Activated CD8-positive, alpha-beta memory T cell treated with anti-CD3 and anti-CD28 coated beads, Interleukin-2, amount 10 ng/mL, durations not matched to agents 7 days and 5 days (primary cell): ENCODE measurements at regions of chr20 and their contacts with region 1.

Region 1: DNA sequence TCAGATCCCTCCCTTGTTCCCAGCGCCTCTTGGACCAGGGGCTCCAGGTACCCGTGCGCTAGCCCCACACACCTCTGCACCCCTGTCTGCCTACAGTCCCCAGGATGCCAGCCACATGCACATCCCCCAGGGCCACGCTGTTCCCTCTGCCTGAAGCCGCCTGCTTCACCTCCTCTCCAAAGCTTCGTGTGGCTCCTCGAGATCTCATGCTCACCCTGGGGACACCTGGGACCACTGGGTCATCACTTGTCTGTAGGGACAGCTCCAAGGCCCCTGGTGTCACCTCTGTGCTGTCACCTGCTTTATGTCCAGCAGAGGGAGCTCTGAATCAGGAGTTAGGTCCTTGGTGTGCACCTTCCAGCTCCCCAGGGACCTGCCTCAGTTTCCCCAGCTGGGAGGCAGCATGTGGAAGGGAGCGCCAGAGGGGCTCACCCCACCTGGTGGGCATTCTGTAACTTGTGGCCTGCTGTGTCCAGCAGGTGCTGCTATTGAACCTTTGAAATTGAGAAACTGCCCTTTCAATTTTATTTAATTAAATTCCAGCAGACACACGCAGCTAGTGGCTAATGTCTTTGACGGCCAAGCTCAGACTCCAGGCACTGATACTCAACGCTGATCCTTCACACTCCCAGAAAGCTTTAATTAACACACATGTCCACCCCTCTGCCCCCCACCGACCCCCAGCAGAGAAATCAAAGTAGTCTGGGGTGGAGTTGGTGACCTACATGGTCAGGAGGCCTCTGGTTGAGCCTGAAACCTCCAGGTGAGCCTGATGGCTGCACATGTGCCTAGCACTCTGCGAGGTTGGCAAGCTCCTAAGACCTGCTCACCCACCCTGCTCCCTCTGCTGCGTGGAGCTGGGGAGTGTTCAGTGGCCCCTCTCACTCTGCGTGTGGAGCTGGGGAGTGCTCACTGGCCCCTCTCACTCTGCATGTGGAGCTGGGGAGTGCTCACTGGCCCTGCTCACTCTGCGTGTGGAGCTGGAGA is 7.6 kb upstream of the YTHDF1 start:
- DNase-seq: peak; percentile 63
- ATAC-seq: peak; percentile 35
- H3K4me3 Mint-ChIP-seq: no peak overlapping the region
- H3K27ac Mint-ChIP-seq: no peak overlapping the region
- H3K4me1 Mint-ChIP-seq: no peaks in the 10 kb centered on the region
- H3K27me3 Mint-ChIP-seq: no peaks in the 10 kb centered on the region

Region 2: DNA sequence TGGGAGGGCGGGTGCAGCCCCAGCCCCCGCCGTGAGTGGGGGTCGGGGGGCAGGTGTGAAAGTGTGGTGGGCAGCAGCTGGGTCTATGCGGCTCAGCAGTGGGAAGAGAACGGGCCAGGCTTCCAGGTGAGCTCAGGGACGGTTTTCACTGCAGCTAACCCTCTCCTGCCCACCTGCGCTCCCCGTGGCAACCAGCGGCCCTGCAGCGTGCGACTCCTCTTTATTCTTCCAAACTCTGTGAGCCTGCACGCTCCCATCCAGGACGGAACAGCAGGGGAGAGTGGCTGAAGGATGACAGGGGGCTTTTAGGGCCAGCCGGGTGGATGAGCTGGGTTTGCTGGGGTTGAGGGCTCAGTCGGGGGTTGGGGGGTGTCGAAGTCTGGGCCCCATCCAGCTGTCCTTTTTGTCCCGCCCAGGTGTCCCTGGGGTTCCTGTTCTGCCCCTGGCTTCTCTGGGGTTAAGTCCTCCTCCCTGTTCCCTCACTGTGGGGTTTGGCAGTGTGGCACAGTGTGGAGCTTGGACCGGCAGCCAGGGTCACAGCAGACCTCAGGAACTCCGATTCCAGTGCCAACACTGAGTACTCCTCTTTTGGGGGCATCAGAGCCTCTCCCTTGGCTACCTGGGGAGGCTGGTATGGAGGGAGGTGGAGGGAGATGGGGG is 11.4 kb after region 1 on chr20:
- CTCF ChIA-PET with region 1: interaction called, 26 read pairs
- DNase-seq: no peak
- ATAC-seq: no peak
- H3K4me3 Mint-ChIP-seq: no peak overlapping the region
- H3K27ac Mint-ChIP-seq: no peak overlapping the region
- H3K4me1 Mint-ChIP-seq: no peaks in the 10 kb centered on the region
- H3K27me3 Mint-ChIP-seq: peaks cover 27% of the 10 kb centered on the region

Region 3: DNA sequence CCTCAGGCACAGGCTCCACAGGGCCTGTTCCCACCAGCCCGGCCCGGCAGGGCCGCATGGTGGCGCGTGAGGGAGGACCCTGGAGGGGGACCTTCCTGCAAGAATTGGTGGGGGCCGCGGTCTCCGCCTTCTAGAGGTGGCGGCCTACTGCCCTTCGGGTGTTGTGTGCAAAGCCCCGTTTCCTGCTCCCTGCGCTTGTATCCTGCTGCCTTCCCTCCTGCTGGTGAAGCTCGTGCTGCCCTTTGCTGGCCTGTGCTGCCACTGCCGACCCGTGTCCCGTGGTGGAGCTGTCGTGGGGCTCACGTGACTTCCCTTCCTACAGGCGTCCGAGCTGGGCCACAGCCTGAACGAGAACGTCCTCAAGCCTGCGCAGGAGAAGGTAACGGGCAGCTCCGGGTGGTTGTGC is 61.0 kb after region 1 on chr20:
- CTCF ChIA-PET with region 1: interaction called, 10 read pairs
- DNase-seq: peak; percentile 51
- ATAC-seq: peak; percentile 35
- H3K4me3 Mint-ChIP-seq: peak overlapping the region; percentile 65
- H3K27ac Mint-ChIP-seq: peak overlapping the region; percentile 70
- H3K4me1 Mint-ChIP-seq: peaks cover 4% of the 10 kb centered on the region
- H3K27me3 Mint-ChIP-seq: no peaks in the 10 kb centered on the region

Region 4: DNA sequence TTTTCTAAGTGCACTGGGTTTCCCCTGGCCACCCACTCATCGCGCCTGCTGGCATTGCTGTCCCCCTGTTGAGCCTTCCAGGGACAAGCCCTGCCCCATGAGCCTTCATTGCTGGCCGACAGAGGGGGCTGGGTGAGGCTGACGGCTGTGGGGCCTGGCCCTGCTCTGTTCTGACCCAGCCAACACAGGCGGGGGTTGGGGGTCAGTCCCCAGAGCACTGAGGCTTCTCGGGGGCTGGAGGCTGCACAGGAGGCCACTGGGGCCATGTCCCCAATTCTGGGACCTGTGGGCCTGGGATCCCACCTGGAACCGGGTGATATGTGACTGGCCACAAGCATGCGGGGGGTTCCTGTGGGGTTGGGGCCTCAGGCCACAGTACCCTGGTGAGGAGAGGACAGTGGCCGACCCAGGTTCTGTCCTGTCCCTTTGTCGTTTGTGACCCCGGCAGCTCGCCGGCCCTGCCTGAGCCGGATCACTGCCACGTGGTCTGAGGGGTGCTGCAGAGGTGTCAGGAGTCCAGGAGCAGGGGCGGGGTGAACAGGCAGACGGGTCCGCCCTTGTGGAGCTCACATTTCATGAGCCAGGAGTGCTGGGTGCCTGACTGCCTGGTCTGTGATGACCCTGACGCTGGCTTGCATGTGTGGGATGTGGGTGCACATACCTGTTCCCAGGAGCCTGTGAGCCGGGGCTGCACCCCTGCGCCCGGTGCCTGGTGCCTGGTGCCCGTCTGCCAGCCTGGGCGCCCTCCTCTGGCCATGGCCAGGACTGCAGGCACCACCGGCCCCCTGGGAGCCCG is 67.4 kb after region 1 on chr20:
- CTCF ChIA-PET with region 1: interaction called, 13 read pairs
- DNase-seq: peak; percentile 64
- ATAC-seq: peak; percentile 76
- H3K4me3 Mint-ChIP-seq: no peak overlapping the region
- H3K27ac Mint-ChIP-seq: no peak overlapping the region
- H3K4me1 Mint-ChIP-seq: peaks cover 3% of the 10 kb centered on the region
- H3K27me3 Mint-ChIP-seq: peaks cover 10% of the 10 kb centered on the region

Region 5: DNA sequence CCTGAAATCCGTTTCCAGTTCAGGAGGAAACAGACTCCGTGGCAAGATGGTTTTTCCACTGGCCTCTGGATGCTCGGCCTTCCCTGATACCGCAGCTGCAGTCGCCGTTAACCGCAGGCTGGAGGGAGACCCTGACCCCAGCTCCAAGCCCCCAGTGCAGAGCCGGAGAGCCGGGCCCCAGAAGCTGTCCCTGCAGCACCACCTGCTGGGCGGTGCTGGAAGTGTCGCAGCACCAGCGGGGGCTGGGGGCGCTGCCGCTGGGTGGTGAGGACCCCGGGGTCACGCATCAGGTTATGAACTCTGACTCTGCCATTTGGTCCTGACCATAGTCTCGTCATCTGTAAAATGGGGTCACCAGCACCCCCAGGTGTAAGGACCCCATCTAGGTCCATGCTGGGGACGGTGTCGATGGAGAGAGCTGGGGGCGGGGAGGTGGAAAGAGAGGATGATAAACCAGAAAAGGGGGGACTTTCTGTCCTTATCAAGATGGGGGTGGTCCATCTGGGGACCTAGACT is 158.4 kb after region 1 on chr20:
- CTCF ChIA-PET with region 1: interaction called, 33 read pairs
- DNase-seq: no peak
- ATAC-seq: no peak
- H3K4me3 Mint-ChIP-seq: no peak overlapping the region
- H3K27ac Mint-ChIP-seq: no peak overlapping the region
- H3K4me1 Mint-ChIP-seq: no peaks in the 10 kb centered on the region
- H3K27me3 Mint-ChIP-seq: peaks cover 5% of the 10 kb centered on the region